ENCODE measurements at regions of chr4 and their contacts with region 1.

Region 1: GRCh38 chr4:186015212-186015785 is 53.7 kb upstream of the TLR3 start:
- DNase-seq: no peak
- H3K4me3 ChIP-seq: no peak overlapping the region
- H3K27ac ChIP-seq: no peak overlapping the region
- H3K4me1 ChIP-seq: no peaks in the 10 kb centered on the region
- H3K27me3 ChIP-seq: no peaks in the 10 kb centered on the region
- CTCF ChIP-seq: no peak

Region 2: DNA sequence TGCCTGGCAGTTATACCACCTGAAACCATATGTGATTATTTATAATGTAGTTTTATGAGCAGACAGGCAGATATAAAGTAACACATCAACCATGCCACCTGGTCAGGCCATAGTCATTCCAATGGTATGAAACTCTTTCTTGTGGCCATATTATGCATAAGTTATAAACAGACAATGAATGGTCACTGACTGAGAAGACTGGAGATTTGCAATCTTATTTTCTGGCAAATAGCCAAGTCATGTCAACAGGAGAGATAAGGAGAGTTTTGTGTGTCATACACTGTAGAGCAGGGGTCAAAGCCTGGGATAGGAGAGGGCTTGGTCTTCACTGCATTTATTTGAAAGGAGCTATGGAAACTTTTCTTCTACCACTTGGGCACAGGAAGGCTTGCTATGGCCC is 232.8 kb before region 1 on chr4:
- intact Hi-C with region 1: loop called (anchors 5 kb)
- DNase-seq: no peak
- H3K4me3 ChIP-seq: no peak overlapping the region
- H3K27ac ChIP-seq: no peak overlapping the region
- H3K4me1 ChIP-seq: peaks cover 0 to 12% (median 2%) of the 10 kb centered on the region in 4 donors
- H3K27me3 ChIP-seq: no peaks in the 10 kb centered on the region
- CTCF ChIP-seq: no peak

Region 3: GRCh38 chr4:186266729-186267456 is 251.6 kb after region 1 on chr4:
- intact Hi-C with region 1: no loop called
- DNase-seq: no peak
- H3K4me3 ChIP-seq: no peak overlapping the region
- H3K27ac ChIP-seq: no peak overlapping the region
- H3K4me1 ChIP-seq: no peaks in the 10 kb centered on the region
- H3K27me3 ChIP-seq: peaks cover 0 to 3% of the 10 kb centered on the region in 2 donors
- CTCF ChIP-seq: no peak

Measured in tibial artery (tissue), 4 donors.